Right cardiac atrium (tissue), 5 donors: ENCODE measurements at regions of chr9 and their contacts with region 1.

Region 1: DNA sequence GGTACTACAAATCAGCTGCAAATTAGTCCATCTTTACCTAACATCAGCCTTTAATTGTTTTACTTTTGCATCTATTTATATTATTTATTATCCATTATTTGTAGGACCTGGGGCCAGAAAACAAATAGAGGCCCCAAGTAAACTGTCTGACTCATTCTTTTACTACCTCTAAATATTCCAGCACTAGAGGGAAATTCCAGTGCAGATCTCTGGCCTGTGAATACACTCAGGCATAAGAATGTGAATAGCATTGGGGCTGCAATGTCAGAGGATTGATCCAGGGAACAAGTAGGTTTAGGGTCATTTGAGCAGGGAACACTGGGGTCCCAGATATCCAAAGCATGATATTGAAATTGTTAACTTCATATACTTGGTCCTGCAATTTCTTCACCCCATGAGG is 176.6 kb upstream of the TYRP1 start:
- DNase-seq: no peak
- ATAC-seq: no peak
- H3K4me3 ChIP-seq: no peak overlapping the region
- H3K27ac ChIP-seq: no peak overlapping the region
- H3K4me1 ChIP-seq: no peaks in the 10 kb centered on the region
- H3K27me3 ChIP-seq: no peaks in the 10 kb centered on the region

Region 2: GRCh38 chr9:12464910-12465512 is 51.6 kb before region 1 on chr9:
- intact Hi-C with region 1: loop called in 1 of 4 experiments (anchors 10 kb)
- DNase-seq: no peak
- ATAC-seq: no peak
- H3K4me3 ChIP-seq: no peak overlapping the region
- H3K27ac ChIP-seq: no peak overlapping the region
- H3K4me1 ChIP-seq: no peaks in the 10 kb centered on the region
- H3K27me3 ChIP-seq: no peaks in the 10 kb centered on the region